Activated CD4-positive, alpha-beta T cell treated with anti-CD3 and anti-CD28 coated beads for 36 hours (primary cell): ENCODE measurements at regions of chr1 and their contacts with region 1.

Region 1: GRCh38 chr1:153990468-153991150 is at the start of gene RPS27:
- DNase-seq: peak; percentile 91
- ATAC-seq: peak; percentile 90
- H3K4me3 Mint-ChIP-seq: peak within 1 kb of the TSS; percentile 93
- H3K27ac Mint-ChIP-seq: peak within 1 kb of the TSS; percentile 96
- H3K4me1 Mint-ChIP-seq: peaks cover 49% of the 10 kb centered on the region
- H3K27me3 Mint-ChIP-seq: no peaks in the 10 kb centered on the region
- total RNA-seq, gene RPS27: 1,867 to 2,094 TPM

Region 2: GRCh38 chr1:153441238-153441933 is 549.2 kb before region 1 on chr1:
- CTCF ChIA-PET with region 1: no interaction called
- POLR2A ChIA-PET with region 1: no interaction called
- intact Hi-C with region 1: no loop called
- DNase-seq: no peak
- ATAC-seq: no peak
- H3K4me3 Mint-ChIP-seq: no peak overlapping the region
- H3K27ac Mint-ChIP-seq: no peak overlapping the region
- H3K4me1 Mint-ChIP-seq: no peaks in the 10 kb centered on the region
- H3K27me3 Mint-ChIP-seq: peaks cover 18% of the 10 kb centered on the region

Region 3: DNA sequence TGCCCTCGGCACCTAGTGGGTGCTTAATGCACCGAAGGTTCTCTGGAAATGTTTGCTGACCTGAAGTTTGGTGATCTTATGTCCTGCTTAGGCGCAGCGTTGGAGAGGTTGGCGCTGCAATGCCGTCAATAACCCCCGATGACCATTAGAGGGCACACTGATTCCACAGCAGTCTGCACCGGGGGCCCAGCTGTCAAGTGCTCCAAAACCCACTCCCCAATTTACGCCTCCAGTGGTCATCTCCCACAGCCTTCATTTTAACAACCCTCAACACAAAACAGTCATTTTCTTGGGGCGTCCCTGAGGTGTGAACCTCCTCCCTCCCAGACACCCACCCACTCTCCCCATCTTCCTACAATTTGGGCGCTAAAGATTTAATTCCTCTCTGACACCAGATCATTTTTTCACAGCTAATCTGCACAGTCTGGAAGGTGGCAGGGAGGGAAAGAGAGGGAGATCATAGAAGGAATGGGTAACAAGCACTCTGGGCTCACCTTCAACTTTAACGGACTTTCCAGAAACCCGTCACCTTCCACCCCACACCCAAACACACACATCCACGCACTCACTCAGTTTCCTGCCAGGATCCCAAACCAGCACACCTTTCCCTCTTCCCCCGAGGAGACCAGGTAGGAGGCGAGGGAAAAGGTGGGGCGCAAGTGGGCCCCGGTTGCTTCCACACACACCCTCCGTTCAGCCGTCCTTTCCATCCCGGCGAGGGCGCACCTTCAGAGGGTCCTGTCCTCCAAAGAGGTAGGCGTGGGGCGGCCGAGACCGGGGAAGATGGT is 312.7 kb before region 1 on chr1:
- CTCF ChIA-PET with region 1: interaction called, 5 read pairs
- POLR2A ChIA-PET with region 1: no interaction called
- intact Hi-C with region 1: loop called in 1 of 2 experiments (anchors 1 kb)
- DNase-seq: peak; percentile 74
- ATAC-seq: peak; percentile 66
- H3K4me3 Mint-ChIP-seq: peak overlapping the region; percentile 64
- H3K27ac Mint-ChIP-seq: no peak overlapping the region
- H3K4me1 Mint-ChIP-seq: peaks cover 21% of the 10 kb centered on the region
- H3K27me3 Mint-ChIP-seq: peaks cover 43% of the 10 kb centered on the region

Region 4: GRCh38 chr1:153796791-153797659 is 193.6 kb before region 1 on chr1:
- CTCF ChIA-PET with region 1: interaction called, 44 read pairs
- POLR2A ChIA-PET with region 1: interaction called, 7 read pairs
- intact Hi-C with region 1: loop called (anchors 1 kb)
- DNase-seq: peak; percentile 92
- ATAC-seq: peak; percentile 92
- H3K4me3 Mint-ChIP-seq: no peak overlapping the region
- H3K27ac Mint-ChIP-seq: peak overlapping the region; percentile 38
- H3K4me1 Mint-ChIP-seq: no peaks in the 10 kb centered on the region
- H3K27me3 Mint-ChIP-seq: no peaks in the 10 kb centered on the region

Region 5: GRCh38 chr1:153922972-153923925 is 67.4 kb before region 1 on chr1 and contains the start of gene GATAD2B:
- CTCF ChIA-PET with region 1: interaction called, 5 read pairs
- POLR2A ChIA-PET with region 1: interaction called, 17 read pairs
- intact Hi-C with region 1: loop called (anchors 1 to 2 kb)
- DNase-seq: peak; percentile 99
- ATAC-seq: peak; percentile 94
- H3K4me3 Mint-ChIP-seq: peak within 1 kb of the TSS; percentile 89
- H3K27ac Mint-ChIP-seq: peak within 1 kb of the TSS; percentile 97
- H3K4me1 Mint-ChIP-seq: peaks cover 36% of the 10 kb centered on the region
- H3K27me3 Mint-ChIP-seq: no peaks in the 10 kb centered on the region
- total RNA-seq, gene GATAD2B: 57.0 to 63.9 TPM

Region 6: DNA sequence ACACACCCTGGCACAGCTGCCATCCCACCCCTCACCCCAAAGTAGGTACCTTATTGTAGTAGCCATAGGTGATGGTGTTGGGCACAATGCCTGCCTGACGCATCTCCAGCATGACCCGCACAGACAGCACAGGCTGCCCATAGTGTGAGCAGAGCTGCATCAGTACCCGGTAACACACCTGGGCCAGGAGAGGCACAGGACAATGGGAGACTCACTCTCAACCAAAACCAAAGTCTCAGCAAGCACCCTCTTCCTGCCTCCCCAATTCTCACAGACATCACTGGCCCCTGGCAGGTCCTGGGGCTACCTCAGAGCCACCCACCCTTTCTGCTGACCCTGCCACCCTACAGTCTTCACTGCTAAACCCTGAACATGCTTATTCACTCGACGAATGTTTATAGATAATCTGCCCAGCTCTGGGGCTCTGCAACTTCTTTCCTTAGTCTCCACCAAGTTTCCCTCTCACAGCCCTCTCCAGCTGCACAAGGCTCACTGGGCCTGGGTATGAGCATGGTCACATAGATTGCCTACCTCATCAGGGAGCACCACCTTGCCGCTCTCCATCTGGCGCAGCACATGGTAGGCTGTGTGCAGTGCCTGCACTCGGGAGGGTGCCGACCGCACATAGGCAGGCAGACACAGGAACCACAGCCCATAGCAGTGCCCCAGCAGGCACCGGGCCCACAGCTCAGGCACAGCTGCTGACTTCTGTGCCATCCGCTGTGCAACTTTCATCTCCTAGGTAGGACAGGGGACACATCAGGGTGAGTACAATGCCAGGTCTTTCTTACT is 54.4 kb before region 1 on chr1:
- CTCF ChIA-PET with region 1: no interaction called
- POLR2A ChIA-PET with region 1: no interaction called
- intact Hi-C with region 1: no loop called
- DNase-seq: no peak
- ATAC-seq: no peak
- H3K4me3 Mint-ChIP-seq: no peak overlapping the region
- H3K27ac Mint-ChIP-seq: no peak overlapping the region
- H3K4me1 Mint-ChIP-seq: no peaks in the 10 kb centered on the region
- H3K27me3 Mint-ChIP-seq: no peaks in the 10 kb centered on the region

Region 7: DNA sequence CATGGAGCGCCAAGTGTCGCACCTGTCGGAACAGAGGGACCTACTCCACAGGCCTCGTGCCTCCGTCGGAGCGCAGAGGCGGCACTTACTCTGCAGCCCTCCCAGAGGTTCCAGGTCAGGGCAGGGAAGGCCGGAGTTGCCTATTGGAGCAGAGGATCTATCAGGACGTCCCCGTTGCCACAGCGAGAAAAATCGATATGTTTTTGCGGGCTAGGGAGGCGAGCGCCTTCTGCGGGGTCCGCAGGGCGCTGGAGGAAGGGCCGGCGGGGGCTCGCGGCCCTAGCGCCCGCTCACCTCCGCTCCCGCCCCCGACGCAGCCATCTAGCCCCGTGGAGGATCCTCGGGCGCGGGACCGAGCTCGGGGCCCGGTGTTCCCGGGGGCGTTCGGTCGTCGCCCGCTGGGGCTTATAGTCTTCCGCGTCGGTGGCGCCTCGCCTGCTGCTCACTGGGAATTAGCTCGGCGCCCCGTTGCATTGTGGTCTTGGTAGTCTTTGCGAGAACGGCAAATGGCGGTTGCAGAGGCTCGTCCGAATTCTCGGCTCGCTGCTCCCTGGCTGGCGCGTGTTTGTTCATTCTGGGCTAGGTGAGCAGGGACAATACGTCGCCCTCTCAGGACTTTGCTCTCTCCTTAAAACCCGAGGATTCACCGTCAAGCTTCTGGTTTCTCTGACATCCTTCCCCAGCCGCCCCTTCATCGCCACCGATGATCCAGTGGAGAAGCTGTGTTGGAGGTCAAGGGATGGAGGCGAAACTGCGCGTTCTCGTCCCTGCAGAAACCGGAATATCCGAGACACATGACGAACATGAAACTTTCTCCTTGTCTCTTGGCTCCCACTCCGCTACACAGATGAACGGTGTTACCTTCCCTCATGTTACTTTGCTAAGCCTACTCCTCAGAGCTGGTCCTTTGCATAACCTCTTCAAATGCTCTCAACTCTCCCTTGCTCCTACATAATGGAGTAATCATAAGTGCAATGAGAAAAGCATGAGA is 13.1 kb before region 1 on chr1 and contains the start of gene JTB:
- CTCF ChIA-PET with region 1: interaction called, 66 read pairs
- POLR2A ChIA-PET with region 1: interaction called, 25 read pairs
- intact Hi-C with region 1: loop called (anchors 1 kb)
- DNase-seq: peak; percentile 94
- ATAC-seq: peak; percentile 95
- H3K4me3 Mint-ChIP-seq: peak within 1 kb of the TSS; percentile 97
- H3K27ac Mint-ChIP-seq: peak within 1 kb of the TSS; percentile 97
- H3K4me1 Mint-ChIP-seq: peaks cover 33% of the 10 kb centered on the region
- H3K27me3 Mint-ChIP-seq: no peaks in the 10 kb centered on the region
- total RNA-seq, gene JTB: 107 to 145 TPM

Region 8: GRCh38 chr1:154183045-154183915 is 192.7 kb after region 1 on chr1:
- CTCF ChIA-PET with region 1: no interaction called
- POLR2A ChIA-PET with region 1: interaction called, 5 read pairs
- intact Hi-C with region 1: loop called (anchors 1 to 5 kb)
- DNase-seq: peak; percentile 98
- ATAC-seq: peak; percentile 72
- H3K4me3 Mint-ChIP-seq: peak overlapping the region; percentile 99
- H3K27ac Mint-ChIP-seq: peak overlapping the region; percentile 100
- H3K4me1 Mint-ChIP-seq: peaks cover 39% of the 10 kb centered on the region
- H3K27me3 Mint-ChIP-seq: no peaks in the 10 kb centered on the region